Mammary epithelial cell (primary cell): ENCODE measurements at regions of chr7 and their contacts with region 1.

Region 1: DNA sequence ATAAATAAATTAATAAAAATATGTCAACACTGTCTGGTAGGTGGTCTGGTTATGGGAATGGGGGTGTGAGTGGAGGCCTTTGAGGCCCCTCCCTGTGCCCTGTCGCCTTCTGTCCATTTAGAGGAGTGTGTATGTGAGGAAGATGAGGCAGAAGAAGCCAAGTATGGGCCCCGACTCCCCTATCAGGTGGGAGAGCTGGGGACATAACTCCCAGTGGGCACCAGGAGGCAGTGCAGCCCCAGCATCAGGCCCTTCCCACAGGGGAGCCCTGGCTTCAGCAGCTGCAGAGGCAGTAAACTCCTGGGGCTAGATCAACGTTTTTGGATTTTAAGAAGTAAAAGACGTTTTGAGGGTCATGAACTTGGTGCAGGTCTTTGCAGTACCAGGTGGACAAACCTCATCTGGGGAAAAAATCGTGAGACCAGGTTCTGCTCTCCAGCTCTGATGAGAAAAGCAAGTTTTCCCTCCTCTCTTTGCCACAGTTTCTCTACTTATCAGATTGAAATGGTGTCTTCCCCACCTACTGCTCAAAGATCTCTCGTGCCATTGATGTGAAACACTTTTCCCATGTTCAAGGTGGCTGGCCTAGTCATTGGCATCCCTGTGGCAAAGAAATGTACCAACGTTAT is 167.8 kb upstream of the EEPD1 start:
- DNase-seq: peak; percentile 38
- H3K4me3 ChIP-seq: no peak overlapping the region
- H3K27ac ChIP-seq: no peak overlapping the region
- H3K4me1 ChIP-seq: no peaks in the 10 kb centered on the region
- H3K27me3 ChIP-seq: peaks cover 2% of the 10 kb centered on the region
- CTCF ChIP-seq: peak; percentile 95 to 99

Region 2: DNA sequence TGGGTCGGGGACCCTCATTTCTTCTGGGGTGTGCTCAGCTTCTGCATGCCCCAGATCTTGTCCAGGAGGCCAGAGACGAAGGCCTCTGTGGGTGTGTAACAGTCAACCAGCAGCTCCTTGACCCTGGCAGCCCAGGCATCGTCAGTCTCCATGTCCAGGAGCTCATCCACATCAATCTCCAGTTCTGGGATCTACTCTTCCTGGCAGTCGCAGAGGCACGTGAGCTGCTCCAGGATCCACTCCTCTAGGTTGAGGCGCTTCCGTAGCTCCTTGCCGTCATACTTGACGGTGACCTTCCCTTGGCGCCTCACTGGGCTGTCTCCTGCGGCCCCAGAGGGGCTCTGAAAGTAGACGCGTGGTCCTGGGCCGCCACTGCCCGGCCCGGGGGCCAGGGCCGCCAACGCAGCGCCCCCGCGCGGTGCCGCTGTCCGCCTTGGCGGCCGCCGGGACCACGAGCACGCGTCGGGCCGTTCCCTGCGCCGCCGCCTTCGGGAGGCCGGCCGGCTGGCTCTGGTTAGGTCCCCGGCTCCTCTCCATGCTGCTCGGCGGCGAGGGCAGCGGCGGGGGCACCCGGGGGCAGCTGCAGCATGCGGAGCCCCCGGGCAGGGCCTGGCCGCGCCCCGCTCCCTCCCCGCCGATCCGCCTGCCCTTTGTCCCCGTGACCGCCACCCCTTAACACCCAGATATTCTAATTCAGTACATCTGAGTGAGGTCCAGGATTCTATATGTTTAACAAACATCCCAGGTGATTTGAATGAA is 13.9 kb before region 1 on chr7:
- CTCF ChIA-PET with region 1: no interaction called
- dilution Hi-C with region 1: no loop called
- in situ Hi-C with region 1: no loop called
- intact Hi-C with region 1: no loop called
- DNase-seq: no peak
- H3K4me3 ChIP-seq: peak overlapping the region in 1 of 3 experiments; percentile 28
- H3K27ac ChIP-seq: no peak overlapping the region
- H3K4me1 ChIP-seq: peaks cover 4% of the 10 kb centered on the region
- H3K27me3 ChIP-seq: peaks cover 14% of the 10 kb centered on the region
- CTCF ChIP-seq: peak in 1 of 2 donors; percentile 12

Region 3: DNA sequence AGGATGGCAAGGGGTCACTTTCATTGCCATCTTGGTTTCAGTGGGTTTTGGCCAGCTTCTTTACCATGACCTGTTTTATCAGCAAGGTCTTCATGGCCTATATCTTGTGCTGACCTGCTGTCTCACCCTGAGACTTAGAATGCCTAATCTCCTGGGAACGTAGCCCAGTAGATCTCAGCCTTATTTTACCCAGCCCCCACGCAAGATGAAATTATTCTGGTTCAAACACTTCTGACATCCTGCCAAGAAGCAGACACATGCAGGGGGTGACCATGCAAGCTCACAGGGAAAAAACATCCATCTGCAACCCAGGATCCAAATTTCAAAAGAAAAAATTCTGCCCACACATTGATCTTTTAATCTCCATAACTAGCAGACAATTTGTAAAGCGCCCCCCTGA is 79.4 kb after region 1 on chr7:
- CTCF ChIA-PET with region 1: no interaction called
- dilution Hi-C with region 1: loop called (anchors 5 kb)
- in situ Hi-C with region 1: no loop called
- intact Hi-C with region 1: no loop called
- DNase-seq: no peak
- H3K4me3 ChIP-seq: no peak overlapping the region
- H3K27ac ChIP-seq: no peak overlapping the region
- H3K4me1 ChIP-seq: no peaks in the 10 kb centered on the region
- H3K27me3 ChIP-seq: no peaks in the 10 kb centered on the region
- CTCF ChIP-seq: no peak

Region 4: GRCh38 chr7:36132012-36132411 is 146.8 kb after region 1 on chr7:
- CTCF ChIA-PET with region 1: no interaction called
- dilution Hi-C with region 1: no loop called
- in situ Hi-C with region 1: no loop called
- intact Hi-C with region 1: loop called (anchors 5 kb)
- DNase-seq: no peak
- H3K4me3 ChIP-seq: no peak overlapping the region
- H3K27ac ChIP-seq: no peak overlapping the region
- H3K4me1 ChIP-seq: no peaks in the 10 kb centered on the region
- H3K27me3 ChIP-seq: no peaks in the 10 kb centered on the region
- CTCF ChIP-seq: no peak

Region 5: DNA sequence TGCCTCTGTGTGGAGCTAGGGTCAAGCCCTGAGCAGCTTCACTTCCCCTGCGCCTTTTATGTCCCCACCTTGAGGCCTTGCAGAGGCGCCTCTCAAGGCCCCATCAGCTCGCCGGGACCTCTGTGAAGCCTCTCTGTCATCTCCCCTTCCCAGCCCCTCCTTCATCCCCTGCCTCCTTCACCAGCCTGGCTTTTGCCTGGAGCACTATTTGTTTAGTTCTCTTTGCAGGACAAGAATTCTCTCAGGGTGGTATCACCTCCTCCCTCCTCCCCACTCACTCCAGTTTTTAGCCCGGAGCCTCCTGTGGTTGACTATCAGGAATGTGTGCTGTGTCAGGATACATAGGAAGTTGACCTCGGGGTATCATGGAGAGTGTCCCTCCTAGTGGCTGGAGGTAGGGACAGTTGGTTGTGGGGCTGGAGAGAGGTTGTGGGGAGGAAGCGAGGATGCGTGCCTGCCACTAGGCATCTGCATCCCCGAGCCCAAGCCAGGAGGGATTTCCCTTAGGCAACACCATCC is 314.6 kb after region 1 on chr7:
- CTCF ChIA-PET with region 1: interaction called, 3 read pairs
- dilution Hi-C with region 1: loop called (anchors 5 kb)
- in situ Hi-C with region 1: no loop called
- intact Hi-C with region 1: no loop called
- DNase-seq: no peak
- H3K4me3 ChIP-seq: no peak overlapping the region
- H3K27ac ChIP-seq: no peak overlapping the region
- H3K4me1 ChIP-seq: peaks cover 16% of the 10 kb centered on the region
- H3K27me3 ChIP-seq: no peaks in the 10 kb centered on the region
- CTCF ChIP-seq: no peak

Region 6: DNA sequence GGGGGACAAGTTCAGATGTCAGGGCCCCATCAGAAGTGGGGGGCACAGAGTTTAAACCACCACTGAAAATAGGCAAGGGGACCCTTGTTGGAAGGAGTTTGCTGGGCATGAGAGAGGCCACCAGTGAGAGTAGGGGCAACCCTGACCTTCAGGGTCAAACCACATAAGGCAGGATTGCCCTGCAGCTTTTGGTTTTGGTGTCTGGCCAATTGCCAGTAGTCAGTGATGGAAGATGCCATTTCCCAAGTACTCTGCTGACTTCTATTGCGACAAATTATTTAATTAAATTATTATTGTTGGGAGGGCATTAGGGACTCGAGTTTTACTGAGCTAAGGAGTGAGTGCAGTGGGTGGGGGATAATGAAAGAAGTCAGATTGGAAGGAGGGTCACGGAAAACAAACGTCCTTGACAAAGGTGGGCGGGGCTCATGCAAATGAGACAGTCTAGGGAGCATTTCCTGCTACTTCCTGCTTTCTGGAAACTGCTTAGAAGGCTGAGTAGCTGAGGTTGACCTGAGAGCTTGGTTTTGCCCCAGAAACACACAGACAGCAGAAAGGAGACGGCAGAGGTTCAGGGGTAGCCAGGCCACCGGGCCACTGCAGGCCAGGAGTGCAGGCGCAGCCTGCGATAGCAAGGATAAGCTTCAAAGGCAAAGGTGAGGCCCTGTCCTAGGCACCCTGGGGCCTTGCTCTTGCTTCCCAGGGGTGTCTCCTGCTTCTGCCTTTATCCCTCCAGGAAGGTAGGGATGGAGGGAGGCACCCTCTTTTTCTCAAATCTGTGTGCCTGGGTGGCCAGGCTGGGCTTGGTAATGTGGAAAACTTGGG is 330.3 kb after region 1 on chr7:
- CTCF ChIA-PET with region 1: no interaction called
- dilution Hi-C with region 1: no loop called
- in situ Hi-C with region 1: no loop called
- intact Hi-C with region 1: loop called (anchors 1 kb)
- DNase-seq: no peak
- H3K4me3 ChIP-seq: no peak overlapping the region
- H3K27ac ChIP-seq: no peak overlapping the region
- H3K4me1 ChIP-seq: no peaks in the 10 kb centered on the region
- H3K27me3 ChIP-seq: peaks cover 2% of the 10 kb centered on the region
- CTCF ChIP-seq: no peak

Region 7: DNA sequence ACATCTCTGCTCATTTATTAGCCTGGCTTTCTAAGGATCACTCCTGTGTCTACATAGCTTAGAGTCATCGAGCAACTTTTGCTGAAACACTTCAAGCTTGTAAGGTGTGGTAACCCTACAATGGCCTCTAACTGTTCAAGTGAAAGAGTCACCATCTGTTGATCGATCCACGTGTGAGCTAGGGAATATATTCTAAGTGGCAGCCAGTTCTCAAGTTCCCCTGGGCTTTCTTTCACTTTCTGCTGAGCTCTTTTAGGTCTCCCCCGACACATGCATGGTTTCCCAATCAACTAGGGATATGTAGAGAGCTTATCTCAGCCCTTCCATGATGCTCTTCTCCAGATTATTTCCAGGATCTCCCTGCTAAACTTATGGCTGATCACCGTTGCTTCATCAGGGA is 723.5 kb after region 1 on chr7:
- CTCF ChIA-PET with region 1: no interaction called
- dilution Hi-C with region 1: no loop called
- in situ Hi-C with region 1: no loop called
- intact Hi-C with region 1: no loop called
- DNase-seq: no peak
- H3K4me3 ChIP-seq: no peak overlapping the region
- H3K27ac ChIP-seq: no peak overlapping the region
- H3K4me1 ChIP-seq: no peaks in the 10 kb centered on the region
- H3K27me3 ChIP-seq: no peaks in the 10 kb centered on the region
- CTCF ChIP-seq: no peak